Mammary epithelial cell (primary cell): ENCODE measurements at regions of chr20 and their contacts with region 1.

Region 1: DNA sequence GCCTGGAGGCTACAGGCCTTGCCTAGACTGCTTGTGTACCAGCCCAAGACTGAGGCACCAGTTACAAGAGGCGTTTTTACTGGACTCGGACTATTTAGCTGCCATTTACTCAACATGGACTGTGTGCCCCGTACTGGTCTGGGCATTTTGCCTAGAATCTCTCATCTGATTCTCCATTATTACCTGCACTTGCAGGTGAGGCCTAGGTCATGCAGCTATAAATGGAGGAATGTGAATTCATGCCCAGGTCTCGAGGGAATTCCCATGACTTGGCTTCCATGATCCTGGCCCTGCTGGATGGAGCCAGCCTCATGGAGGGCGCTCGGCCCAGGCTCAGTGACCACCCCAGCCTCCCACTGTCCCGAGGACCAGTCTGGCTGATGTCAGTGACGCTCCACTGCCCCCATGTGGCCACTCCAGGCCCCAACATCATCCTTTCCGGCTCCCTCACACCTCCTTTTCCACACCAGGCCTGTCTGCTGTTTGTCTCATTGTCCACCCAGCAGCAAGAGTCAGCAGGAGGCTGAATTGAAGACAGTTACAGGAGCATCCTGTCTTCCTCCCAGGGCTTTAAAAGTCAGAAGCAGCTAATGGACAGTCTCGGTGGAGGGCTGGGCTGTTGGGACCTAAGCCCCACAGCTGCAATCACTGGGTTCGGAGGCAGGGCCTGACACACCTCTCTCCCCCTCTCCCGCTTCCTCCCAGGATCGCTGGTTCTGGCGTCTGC is 8.7 kb downstream of the MMP24OS start:
- DNase-seq: peak; percentile 50
- H3K4me3 ChIP-seq: no peak overlapping the region
- H3K27ac ChIP-seq: no peak overlapping the region
- H3K4me1 ChIP-seq: peaks cover 3% of the 10 kb centered on the region
- H3K27me3 ChIP-seq: no peaks in the 10 kb centered on the region
- CTCF ChIP-seq: peak; percentile 77 to 89

Region 2: GRCh38 chr20:34825530-34826362 is 443.5 kb before region 1 on chr20 and contains the start of gene NCOA6:
- CTCF ChIA-PET with region 1: no interaction called
- dilution Hi-C with region 1: no loop called
- in situ Hi-C with region 1: loop called in 1 of 2 experiments (anchors 25 kb)
- intact Hi-C with region 1: no loop called
- DNase-seq: peak; percentile 63
- H3K4me3 ChIP-seq: peak within 1 kb of the TSS; percentile 84 to 100 (median 89)
- H3K27ac ChIP-seq: peak within 1 kb of the TSS; percentile 76
- H3K4me1 ChIP-seq: peaks cover 19% of the 10 kb centered on the region
- H3K27me3 ChIP-seq: no peaks in the 10 kb centered on the region
- CTCF ChIP-seq: no peak
- total RNA-seq, gene NCOA6: 12.7 to 24.5 TPM

Region 3: GRCh38 chr20:34834459-34834893 is 434.7 kb before region 1 on chr20:
- CTCF ChIA-PET with region 1: no interaction called
- dilution Hi-C with region 1: no loop called
- in situ Hi-C with region 1: loop called in 1 of 2 experiments (anchors 25 kb)
- intact Hi-C with region 1: loop called (anchors 2 kb)
- DNase-seq: peak; percentile 16
- H3K4me3 ChIP-seq: peak overlapping the region in 1 of 3 experiments; percentile 28
- H3K27ac ChIP-seq: no peak overlapping the region
- H3K4me1 ChIP-seq: no peaks in the 10 kb centered on the region
- H3K27me3 ChIP-seq: peaks cover 4% of the 10 kb centered on the region
- CTCF ChIP-seq: peak; percentile 20 to 39

Region 4: GRCh38 chr20:35092524-35093266 is 176.5 kb before region 1 on chr20 and contains the start of gene TRPC4AP:
- CTCF ChIA-PET with region 1: interaction called, 3 read pairs
- dilution Hi-C with region 1: no loop called
- in situ Hi-C with region 1: no loop called
- intact Hi-C with region 1: loop called (anchors 2 kb)
- DNase-seq: peak; percentile 87
- H3K4me3 ChIP-seq: peak within 1 kb of the TSS; percentile 75 to 99 (median 97)
- H3K27ac ChIP-seq: peak within 1 kb of the TSS; percentile 72
- H3K4me1 ChIP-seq: peaks cover 30% of the 10 kb centered on the region
- H3K27me3 ChIP-seq: no peaks in the 10 kb centered on the region
- CTCF ChIP-seq: peak; percentile 81 to 98
- total RNA-seq, gene TRPC4AP: 63.8 to 89.0 TPM

Region 5: DNA sequence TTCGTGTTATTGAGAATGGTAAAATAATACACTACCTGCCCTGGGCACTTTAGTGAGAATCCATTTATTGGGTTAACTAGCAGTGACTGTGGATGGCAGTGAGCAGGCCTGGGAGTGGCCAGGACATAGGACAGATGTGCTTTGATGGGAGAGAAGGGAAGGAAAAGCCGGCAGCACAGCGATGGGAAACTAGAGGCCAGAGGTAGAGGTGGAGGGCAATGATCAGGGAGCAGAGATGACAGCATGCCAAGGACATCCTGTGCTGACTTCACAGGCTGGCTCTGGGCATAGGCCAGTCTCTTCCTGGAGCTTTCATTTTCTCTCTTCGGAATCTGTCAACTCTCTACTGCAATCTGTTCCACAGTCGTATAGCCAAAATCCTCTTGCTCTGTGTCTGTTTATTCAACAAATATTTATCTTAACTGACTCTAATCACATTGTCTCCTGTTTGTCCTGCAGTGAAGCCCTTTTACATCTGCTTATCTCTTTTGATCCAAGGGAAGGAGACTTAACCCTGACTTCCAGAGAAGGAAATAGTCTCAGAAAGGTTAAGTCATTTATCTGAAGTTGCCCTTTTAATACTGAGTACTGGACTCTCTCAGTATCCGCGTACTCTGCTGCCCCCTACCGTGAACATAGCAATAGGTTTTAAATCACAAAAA is 61.1 kb before region 1 on chr20:
- CTCF ChIA-PET with region 1: no interaction called
- dilution Hi-C with region 1: no loop called
- in situ Hi-C with region 1: no loop called
- intact Hi-C with region 1: loop called (anchors 2 kb)
- DNase-seq: peak; percentile 63
- H3K4me3 ChIP-seq: peak overlapping the region in 1 of 3 experiments; percentile 9
- H3K27ac ChIP-seq: no peak overlapping the region
- H3K4me1 ChIP-seq: peaks cover 6% of the 10 kb centered on the region
- H3K27me3 ChIP-seq: no peaks in the 10 kb centered on the region
- CTCF ChIP-seq: peak; percentile 78 to 86

Region 6: DNA sequence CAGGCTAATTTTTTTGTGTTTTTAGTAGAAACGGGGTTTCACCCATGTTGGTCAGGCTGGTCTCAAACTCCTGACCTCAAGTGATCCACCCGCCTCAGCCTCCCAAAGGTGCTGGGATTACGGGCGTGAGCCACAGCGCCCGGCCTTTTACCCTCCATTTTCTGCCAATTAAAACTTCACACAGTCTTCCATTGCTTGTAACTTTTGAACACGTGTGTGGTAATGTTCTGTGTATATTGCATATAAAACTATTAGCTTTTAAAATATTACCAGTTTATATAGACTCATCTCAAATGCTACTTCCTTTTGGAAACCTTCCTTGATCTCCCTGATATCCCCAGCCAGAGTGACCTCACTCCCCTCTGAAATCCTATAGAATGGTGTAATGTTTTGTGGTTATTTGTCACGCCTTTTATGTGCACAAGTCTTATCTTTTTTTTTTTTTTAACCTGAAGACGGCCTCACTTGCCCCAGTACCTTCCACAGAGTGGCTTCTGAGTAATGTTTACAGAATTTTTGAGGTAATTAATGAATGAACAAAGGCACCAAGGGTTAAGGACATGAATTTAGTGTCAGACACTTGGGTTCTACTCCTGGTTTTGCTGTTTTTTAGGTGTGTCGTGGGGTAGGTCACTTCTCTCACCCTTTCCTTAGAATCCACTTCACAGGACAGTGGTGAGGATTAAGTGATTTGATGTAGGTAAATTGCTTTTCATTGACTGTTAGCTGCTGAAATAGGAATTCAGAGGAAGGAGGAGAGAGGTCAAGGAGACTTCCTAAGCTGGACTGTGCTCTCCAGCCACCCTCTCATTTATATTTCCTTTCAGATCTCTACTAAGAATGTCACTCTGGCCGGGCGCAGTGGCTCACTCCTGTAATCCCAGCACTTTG is 53.9 kb before region 1 on chr20:
- CTCF ChIA-PET with region 1: no interaction called
- dilution Hi-C with region 1: no loop called
- in situ Hi-C with region 1: no loop called
- intact Hi-C with region 1: loop called (anchors 5 kb)
- DNase-seq: peak; percentile 77
- H3K4me3 ChIP-seq: no peak overlapping the region
- H3K27ac ChIP-seq: no peak overlapping the region
- H3K4me1 ChIP-seq: peaks cover 8% of the 10 kb centered on the region
- H3K27me3 ChIP-seq: no peaks in the 10 kb centered on the region
- CTCF ChIP-seq: no peak

Region 7: DNA sequence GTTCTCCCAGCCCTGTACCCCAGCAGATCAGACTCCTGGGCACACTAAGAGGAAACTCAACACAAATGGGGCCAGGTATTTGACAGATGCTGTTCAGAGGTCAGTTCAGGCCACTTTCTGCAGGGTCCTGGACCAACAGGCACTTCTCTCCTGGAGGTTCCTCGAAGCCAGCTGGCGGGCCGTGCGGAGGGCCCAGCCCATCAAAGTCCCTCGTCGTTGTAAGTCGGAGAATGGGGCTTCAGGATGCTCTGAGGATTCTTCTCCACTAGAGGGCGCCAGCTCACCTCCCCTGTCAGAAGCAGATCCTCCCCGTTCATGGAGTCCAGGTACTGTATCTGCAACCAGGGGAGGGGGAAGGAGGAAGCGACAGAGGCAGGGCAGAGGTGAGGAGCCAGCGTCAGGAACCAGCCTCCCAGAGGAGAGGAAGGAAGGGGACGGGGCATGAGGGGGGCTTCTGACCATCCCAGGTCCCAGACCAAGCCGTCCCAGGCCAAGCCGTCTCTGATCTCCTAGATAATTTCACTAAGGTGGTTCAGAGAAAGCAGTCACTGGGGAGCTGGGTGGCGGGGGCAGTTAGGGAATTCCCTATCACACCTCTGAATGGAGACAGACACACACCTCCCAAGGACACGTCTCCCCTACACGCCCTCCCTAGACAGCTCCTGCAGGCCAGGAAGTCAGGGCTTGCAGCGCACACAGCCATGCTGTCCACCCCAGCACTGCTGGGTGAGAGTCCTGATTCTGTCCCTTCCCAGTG is 34.7 kb after region 1 on chr20:
- CTCF ChIA-PET with region 1: no interaction called
- dilution Hi-C with region 1: no loop called
- in situ Hi-C with region 1: no loop called
- intact Hi-C with region 1: no loop called
- DNase-seq: peak; percentile 89
- H3K4me3 ChIP-seq: no peak overlapping the region
- H3K27ac ChIP-seq: peak overlapping the region; percentile 95
- H3K4me1 ChIP-seq: peaks cover 74% of the 10 kb centered on the region
- H3K27me3 ChIP-seq: no peaks in the 10 kb centered on the region
- CTCF ChIP-seq: peak; percentile 88 to 97

Region 8: GRCh38 chr20:35318502-35319157 is 49.4 kb after region 1 on chr20:
- CTCF ChIA-PET with region 1: no interaction called
- dilution Hi-C with region 1: loop called (anchors 5 kb)
- in situ Hi-C with region 1: no loop called
- intact Hi-C with region 1: no loop called
- DNase-seq: peak; percentile 98
- H3K4me3 ChIP-seq: no peak overlapping the region
- H3K27ac ChIP-seq: peak overlapping the region; percentile 73
- H3K4me1 ChIP-seq: peaks cover 46% of the 10 kb centered on the region
- H3K27me3 ChIP-seq: no peaks in the 10 kb centered on the region
- CTCF ChIP-seq: no peak